CD4-positive, alpha-beta T cell (primary cell): ENCODE measurements at regions of chr13 and their contacts with region 1.

Region 1: GRCh38 chr13:44577236-44578066 is 1.3 kb upstream of the TSC22D1 start:
- DNase-seq: peak; percentile 93 to 98 (median 96)
- ATAC-seq: peak; percentile 73
- H3K4me3 ChIP-seq: peak overlapping the region; percentile 77
- H3K4me3 Mint-ChIP-seq: peak overlapping the region; percentile 99
- H3K27ac ChIP-seq: peak overlapping the region; percentile 86 to 89
- H3K27ac Mint-ChIP-seq: peak overlapping the region; percentile 96
- H3K4me1 ChIP-seq: peaks cover 37% of the 10 kb centered on the region
- H3K4me1 Mint-ChIP-seq: peaks cover 41% of the 10 kb centered on the region
- H3K27me3 ChIP-seq: no peaks in the 10 kb centered on the region
- H3K27me3 Mint-ChIP-seq: no peaks in the 10 kb centered on the region
- CTCF ChIP-seq: no peak

Region 2: DNA sequence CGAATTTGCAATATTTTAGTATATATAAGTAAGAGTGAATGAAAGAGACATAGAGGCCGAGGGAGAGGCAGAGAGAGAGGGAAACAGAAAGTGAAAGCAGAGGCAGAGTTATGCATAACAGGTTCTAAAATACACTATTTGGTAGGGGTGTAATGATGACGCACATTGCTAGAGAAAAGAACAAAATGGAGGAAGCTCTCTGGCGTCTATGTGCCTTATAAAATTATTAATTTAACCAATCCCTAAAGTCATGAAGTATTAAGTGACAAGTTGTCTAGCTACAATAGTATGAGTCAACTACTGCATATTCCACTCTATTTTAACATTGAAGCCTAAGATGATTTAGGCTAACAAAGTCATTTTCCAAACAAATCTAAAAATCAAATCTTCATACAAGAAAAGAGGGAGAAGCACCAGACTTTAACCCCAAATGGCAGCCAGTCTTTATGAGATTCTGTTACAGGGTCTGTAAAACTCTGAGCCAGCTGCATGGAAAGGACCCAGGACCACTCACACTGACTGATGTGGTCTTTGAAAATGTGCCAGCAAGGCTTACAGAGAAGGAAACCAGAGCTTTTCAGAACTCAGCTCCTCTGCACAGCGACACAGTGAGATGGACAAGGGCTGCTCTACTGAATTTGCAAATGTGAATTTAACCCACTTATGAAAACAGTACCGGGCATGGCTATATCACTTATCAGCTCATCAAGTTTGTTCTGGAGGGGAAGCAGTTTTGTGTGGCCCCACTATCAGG is 302.8 kb before region 1 on chr13:
- CTCF ChIA-PET with region 1: no interaction called
- POLR2A ChIA-PET with region 1: interaction called, 3 read pairs
- intact Hi-C with region 1: loop called in 1 of 2 experiments (anchors 5 kb)
- DNase-seq: peak in 10 of 14 experiments; percentile 2 to 91 (median 27)
- ATAC-seq: peak; percentile 95
- H3K4me3 ChIP-seq: peak overlapping the region; percentile 42
- H3K4me3 Mint-ChIP-seq: peak overlapping the region; percentile 36
- H3K27ac ChIP-seq: peak overlapping the region; percentile 65 to 85
- H3K27ac Mint-ChIP-seq: peak overlapping the region; percentile 95
- H3K4me1 ChIP-seq: peaks cover 24% of the 10 kb centered on the region
- H3K4me1 Mint-ChIP-seq: peaks cover 47% of the 10 kb centered on the region
- H3K27me3 ChIP-seq: no peaks in the 10 kb centered on the region
- H3K27me3 Mint-ChIP-seq: no peaks in the 10 kb centered on the region
- CTCF ChIP-seq: no peak

Region 3: GRCh38 chr13:44537248-44537647 is 40.2 kb before region 1 on chr13:
- CTCF ChIA-PET with region 1: no interaction called
- POLR2A ChIA-PET with region 1: interaction called, 3 read pairs
- intact Hi-C with region 1: loop called in 1 of 2 experiments (anchors 5 kb)
- DNase-seq: peak in 3 of 14 experiments; percentile 4 to 15 (median 13)
- ATAC-seq: no peak
- H3K4me3 ChIP-seq: no peak overlapping the region
- H3K4me3 Mint-ChIP-seq: no peak overlapping the region
- H3K27ac ChIP-seq: no peak overlapping the region
- H3K27ac Mint-ChIP-seq: no peak overlapping the region
- H3K4me1 ChIP-seq: no peaks in the 10 kb centered on the region
- H3K4me1 Mint-ChIP-seq: peaks cover 28% of the 10 kb centered on the region
- H3K27me3 ChIP-seq: no peaks in the 10 kb centered on the region
- H3K27me3 Mint-ChIP-seq: no peaks in the 10 kb centered on the region
- CTCF ChIP-seq: no peak

Region 4: GRCh38 chr13:44988973-44989817 is 411.7 kb after region 1 on chr13 and contains the starts of genes GPALPP1 and NUFIP1:
- CTCF ChIA-PET with region 1: no interaction called
- POLR2A ChIA-PET with region 1: no interaction called
- intact Hi-C with region 1: loop called (anchors 5 to 10 kb)
- DNase-seq: peak; percentile 79 to 96 (median 89)
- ATAC-seq: peak; percentile 98
- H3K4me3 ChIP-seq: peak within 1 kb of the TSS; percentile 83
- H3K4me3 Mint-ChIP-seq: peak within 1 kb of the TSS; percentile 99
- H3K27ac ChIP-seq: peak within 1 kb of the TSS; percentile 75 to 87
- H3K27ac Mint-ChIP-seq: peak within 1 kb of the TSS; percentile 92
- H3K4me1 ChIP-seq: peaks cover 30% of the 10 kb centered on the region
- H3K4me1 Mint-ChIP-seq: peaks cover 65% of the 10 kb centered on the region
- H3K27me3 ChIP-seq: no peaks in the 10 kb centered on the region
- H3K27me3 Mint-ChIP-seq: no peaks in the 10 kb centered on the region
- CTCF ChIP-seq: no peak
- total RNA-seq, gene GPALPP1: 18.9 to 20.8 TPM
- total RNA-seq, gene NUFIP1: 4.3 to 4.4 TPM

Region 5: DNA sequence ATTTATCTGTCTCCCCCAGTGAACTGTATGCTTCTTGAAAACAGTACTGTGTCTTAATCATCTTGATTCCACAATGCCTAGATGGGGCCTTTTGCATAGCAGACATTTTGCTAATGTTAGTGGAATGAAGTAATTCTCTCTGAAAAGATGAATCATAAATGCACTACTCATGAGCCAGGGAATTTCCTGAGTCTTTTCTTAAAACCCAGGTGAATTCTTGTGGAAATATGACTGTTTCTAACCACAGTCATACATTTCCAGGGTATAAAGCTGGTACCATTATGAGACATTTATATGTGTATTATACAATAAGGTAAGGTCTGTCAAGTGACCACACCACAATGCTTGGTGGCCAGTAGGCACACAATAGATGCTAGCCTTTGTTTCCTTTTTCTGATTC is 628.9 kb after region 1 on chr13:
- CTCF ChIA-PET with region 1: no interaction called
- POLR2A ChIA-PET with region 1: no interaction called
- intact Hi-C with region 1: no loop called
- DNase-seq: no peak
- ATAC-seq: no peak
- H3K4me3 ChIP-seq: no peak overlapping the region
- H3K4me3 Mint-ChIP-seq: no peak overlapping the region
- H3K27ac ChIP-seq: no peak overlapping the region
- H3K27ac Mint-ChIP-seq: no peak overlapping the region
- H3K4me1 ChIP-seq: no peaks in the 10 kb centered on the region
- H3K4me1 Mint-ChIP-seq: no peaks in the 10 kb centered on the region
- H3K27me3 ChIP-seq: no peaks in the 10 kb centered on the region
- H3K27me3 Mint-ChIP-seq: no peaks in the 10 kb centered on the region
- CTCF ChIP-seq: no peak

Region 6: GRCh38 chr13:45417790-45418534 is 840.5 kb after region 1 on chr13 and contains the start of gene SLC25A30:
- CTCF ChIA-PET with region 1: no interaction called
- POLR2A ChIA-PET with region 1: no interaction called
- intact Hi-C with region 1: loop called in 1 of 2 experiments (anchors 5 kb)
- DNase-seq: peak; percentile 80 to 96 (median 90)
- ATAC-seq: peak; percentile 89
- H3K4me3 ChIP-seq: peak within 1 kb of the TSS; percentile 90
- H3K4me3 Mint-ChIP-seq: peak within 1 kb of the TSS; percentile 97
- H3K27ac ChIP-seq: peak within 1 kb of the TSS; percentile 68 to 82
- H3K27ac Mint-ChIP-seq: peak within 1 kb of the TSS; percentile 94
- H3K4me1 ChIP-seq: peaks cover 34% of the 10 kb centered on the region
- H3K4me1 Mint-ChIP-seq: peaks cover 30% of the 10 kb centered on the region
- H3K27me3 ChIP-seq: no peaks in the 10 kb centered on the region
- H3K27me3 Mint-ChIP-seq: no peaks in the 10 kb centered on the region
- CTCF ChIP-seq: no peak
- total RNA-seq, gene SLC25A30: 23.2 to 28.6 TPM